ENCODE measurements at regions of chr16 and their contacts with region 1.

Region 1: DNA sequence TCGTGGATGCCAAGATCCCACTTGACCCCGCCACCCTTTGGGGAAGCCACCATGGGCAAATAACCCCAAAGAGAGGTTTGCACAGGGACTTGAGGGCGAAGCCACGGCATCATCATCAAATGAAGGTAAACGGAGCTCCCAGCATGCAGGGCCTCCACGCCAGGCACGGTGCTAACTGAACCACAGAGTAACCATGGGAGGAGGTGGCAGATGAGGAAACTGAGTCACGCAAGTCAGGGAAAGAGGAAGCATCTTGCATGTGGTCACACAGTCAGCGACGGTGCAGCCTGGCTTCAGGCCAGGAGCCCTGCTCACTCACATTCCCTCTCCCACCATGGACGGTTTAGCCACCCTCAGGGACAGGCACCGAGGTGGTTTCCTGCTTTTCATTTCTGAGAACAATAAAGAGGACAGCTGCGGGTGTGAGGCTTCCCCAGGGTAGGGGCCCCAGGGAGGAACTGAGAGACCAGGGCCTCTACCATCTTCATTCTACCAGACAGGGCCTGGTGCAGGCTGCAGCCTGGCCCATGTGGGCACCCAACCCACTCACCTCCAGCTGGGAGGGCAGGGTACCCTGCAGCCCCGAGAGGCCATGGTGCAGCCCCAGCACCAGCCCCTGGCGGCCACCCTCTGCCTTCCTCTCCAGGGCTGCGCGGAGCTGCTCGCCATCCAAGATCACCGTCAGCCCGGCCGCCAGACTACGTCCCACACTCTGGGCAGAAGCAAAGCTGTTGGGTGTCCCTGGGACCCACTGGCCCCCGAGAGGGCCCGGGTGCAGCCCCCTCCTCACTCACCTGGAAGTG is 78.3 kb downstream of the RMI2 start:
- DNase-seq: peak; percentile 48
- H3K4me3 ChIP-seq: no peak overlapping the region
- H3K27ac ChIP-seq: no peak overlapping the region
- H3K4me1 ChIP-seq: peaks cover 7% of the 10 kb centered on the region
- CTCF ChIP-seq: no peak

Region 2: DNA sequence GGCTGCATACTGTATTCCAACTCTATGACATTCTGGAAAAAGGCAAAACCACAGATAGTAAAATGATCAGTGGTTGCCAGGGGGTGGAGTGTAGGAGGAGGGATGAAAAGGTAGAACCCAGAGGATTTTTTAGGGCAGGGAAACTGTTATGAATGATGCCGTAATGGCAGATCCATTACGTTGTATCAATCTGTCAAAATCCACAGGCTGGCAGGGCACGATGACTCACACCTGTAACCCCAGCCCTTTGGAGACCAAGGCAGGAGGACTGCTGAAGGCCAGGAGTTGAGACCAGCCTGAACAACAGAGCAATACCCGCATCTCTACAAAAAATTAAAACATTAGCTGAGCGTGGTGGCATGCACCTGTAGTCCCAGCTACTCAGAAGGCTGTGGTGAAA is 13.6 kb after region 1 on chr16:
- CTCF ChIA-PET with region 1: no interaction called
- POLR2A ChIA-PET with region 1: interaction called, 11 read pairs
- intact Hi-C with region 1: no loop called
- DNase-seq: no peak
- H3K4me3 ChIP-seq: no peak overlapping the region
- H3K27ac ChIP-seq: no peak overlapping the region
- H3K4me1 ChIP-seq: no peaks in the 10 kb centered on the region
- CTCF ChIP-seq: no peak